A673 (cell line): ENCODE measurements at regions of chr15 and their contacts with region 1.

Region 1: GRCh38 chr15:23912191-23912590 is 225.1 kb upstream of the NDN start:
- DNase-seq: no peak
- H3K4me3 ChIP-seq: no peak overlapping the region
- H3K27ac ChIP-seq: no peak overlapping the region
- H3K4me1 ChIP-seq: no peaks in the 10 kb centered on the region
- H3K27me3 ChIP-seq: no peaks in the 10 kb centered on the region
- CTCF ChIP-seq: no peak

Region 2: GRCh38 chr15:23954931-23955330 is 42.7 kb after region 1 on chr15:
- CTCF ChIA-PET with region 1: no interaction called
- POLR2A ChIA-PET with region 1: no interaction called
- intact Hi-C with region 1: loop called (anchors 10 kb)
- DNase-seq: no peak
- H3K4me3 ChIP-seq: no peak overlapping the region
- H3K27ac ChIP-seq: no peak overlapping the region
- H3K4me1 ChIP-seq: no peaks in the 10 kb centered on the region
- H3K27me3 ChIP-seq: no peaks in the 10 kb centered on the region
- CTCF ChIP-seq: no peak

Region 3: GRCh38 chr15:23998056-23998455 is 85.9 kb after region 1 on chr15:
- CTCF ChIA-PET with region 1: no interaction called
- POLR2A ChIA-PET with region 1: no interaction called
- intact Hi-C with region 1: no loop called
- DNase-seq: no peak
- H3K4me3 ChIP-seq: no peak overlapping the region
- H3K27ac ChIP-seq: no peak overlapping the region
- H3K4me1 ChIP-seq: no peaks in the 10 kb centered on the region
- H3K27me3 ChIP-seq: no peaks in the 10 kb centered on the region
- CTCF ChIP-seq: no peak